PC-9 (cell line): ENCODE measurements at regions of chr22 and their contacts with region 1.

Region 1: GRCh38 chr22:29167032-29167911 is 38.4 kb upstream of the EMID1 start:
- DNase-seq: no peak
- H3K4me3 ChIP-seq: no peak overlapping the region
- H3K27ac ChIP-seq: no peak overlapping the region
- H3K4me1 ChIP-seq: no peaks in the 10 kb centered on the region
- H3K27me3 ChIP-seq: peaks cover 14% of the 10 kb centered on the region
- CTCF ChIP-seq: no peak

Region 2: GRCh38 chr22:28937206-28938025 is 229.9 kb before region 1 on chr22:
- CTCF ChIA-PET with region 1: no interaction called
- POLR2A ChIA-PET with region 1: interaction called, 10 read pairs
- intact Hi-C with region 1: no loop called
- DNase-seq: no peak
- H3K4me3 ChIP-seq: no peak overlapping the region
- H3K27ac ChIP-seq: no peak overlapping the region
- H3K4me1 ChIP-seq: no peaks in the 10 kb centered on the region
- H3K27me3 ChIP-seq: no peaks in the 10 kb centered on the region
- CTCF ChIP-seq: no peak

Region 3: GRCh38 chr22:29093501-29094300 is 73.6 kb before region 1 on chr22:
- CTCF ChIA-PET with region 1: no interaction called
- POLR2A ChIA-PET with region 1: no interaction called
- intact Hi-C with region 1: no loop called
- DNase-seq: no peak
- H3K4me3 ChIP-seq: no peak overlapping the region
- H3K27ac ChIP-seq: no peak overlapping the region
- H3K4me1 ChIP-seq: peaks cover 10% of the 10 kb centered on the region; the same call in 1 of the 2 replicates
- H3K27me3 ChIP-seq: no peaks in the 10 kb centered on the region
- CTCF ChIP-seq: no peak

Region 4: GRCh38 chr22:29269731-29270470 is 102.6 kb after region 1 on chr22:
- CTCF ChIA-PET with region 1: no interaction called
- POLR2A ChIA-PET with region 1: no interaction called
- intact Hi-C with region 1: no loop called
- DNase-seq: no peak
- H3K4me3 ChIP-seq: peak overlapping the region; percentile 88
- H3K27ac ChIP-seq: peak overlapping the region; percentile 94
- H3K4me1 ChIP-seq: peaks cover 32% of the 10 kb centered on the region
- H3K27me3 ChIP-seq: no peaks in the 10 kb centered on the region
- CTCF ChIP-seq: no peak